A549 (cell line): ENCODE measurements at regions of chr7 and their contacts with region 1.

Region 1: DNA sequence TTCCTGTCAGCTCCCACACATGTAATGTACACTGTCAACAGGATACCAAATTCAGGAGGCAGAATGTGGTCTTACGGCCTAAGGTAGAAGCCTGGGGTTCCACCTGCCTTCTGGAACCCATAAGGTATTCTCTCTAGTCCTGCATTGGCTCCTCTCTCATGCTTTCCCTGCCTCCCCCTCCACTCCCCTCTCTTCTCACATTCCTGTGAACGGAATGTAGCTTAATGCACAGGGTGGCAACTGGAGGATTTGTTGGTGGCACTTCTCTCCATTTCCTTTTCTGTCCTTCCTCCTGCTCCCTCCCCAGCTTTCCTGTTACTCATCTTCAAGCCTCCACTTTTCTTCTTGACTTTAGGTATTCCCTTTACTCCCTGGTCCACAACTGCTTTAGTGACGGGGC is 11.5 kb upstream of the FLNC start:
- DNase-seq: no peak
- ATAC-seq: no peak
- H3K4me3 ChIP-seq: no peak overlapping the region
- H3K27ac ChIP-seq: no peak overlapping the region
- H3K4me1 ChIP-seq: no peaks in the 10 kb centered on the region
- CTCF ChIP-seq: no peak
- EP300 ChIP-seq: no peak
- POLR2A ChIP-seq: no peak
- RAD21 ChIP-seq: no peak

Region 2: DNA sequence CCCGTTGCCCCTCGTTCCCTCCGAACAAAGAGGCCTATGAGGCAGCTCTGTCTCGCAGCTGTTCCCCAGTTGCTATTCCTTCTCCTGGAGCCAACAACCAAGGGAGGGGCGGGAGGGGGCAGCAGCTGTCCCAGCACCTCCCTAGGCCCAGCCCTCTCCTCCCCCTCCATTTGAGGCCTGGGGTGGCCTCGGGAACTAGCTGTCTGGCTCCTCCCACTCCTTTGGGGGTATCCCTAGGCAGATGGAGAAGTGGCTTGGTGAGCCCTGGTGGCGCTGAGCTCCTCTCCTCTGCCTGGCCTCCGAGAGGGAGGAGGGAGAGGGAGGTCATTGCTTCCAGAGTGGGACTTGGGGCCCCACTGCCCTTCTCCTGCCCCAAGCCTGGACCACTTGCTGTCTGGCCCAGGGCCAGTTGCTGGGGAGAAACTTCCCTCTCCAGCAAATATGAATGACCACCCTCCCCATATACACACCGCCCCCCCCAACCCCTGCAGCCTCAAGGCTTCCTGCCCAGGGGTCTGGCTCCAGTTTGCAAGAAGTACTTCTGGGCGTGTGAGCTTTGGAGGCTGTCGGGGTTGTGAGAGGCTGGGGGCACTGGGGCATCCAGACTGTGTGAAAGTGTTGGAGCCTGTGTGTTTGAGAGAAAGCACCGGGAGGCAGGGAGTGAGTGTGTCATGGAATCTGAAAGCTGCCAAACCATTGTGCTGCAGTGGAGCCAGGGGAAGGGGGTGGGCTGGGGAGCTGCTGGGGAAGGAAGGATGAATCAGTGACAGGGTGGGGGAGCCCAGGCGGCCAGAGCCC is 14.7 kb after region 1 on chr7:
- CTCF ChIA-PET with region 1: interaction called, 22 read pairs
- POLR2A ChIA-PET with region 1: interaction called, 8 read pairs
- DNase-seq: no peak
- ATAC-seq: peak in 1 of 2 experiments; percentile 44; a peak in 3 of 6 replicates
- H3K4me3 ChIP-seq: no peak overlapping the region
- H3K27ac ChIP-seq: peak overlapping the region in 1 of 2 experiments; percentile 50; a peak in 3 of 6 replicates
- H3K4me1 ChIP-seq: peaks cover 40% of the 10 kb centered on the region
- CTCF ChIP-seq: no peak
- EP300 ChIP-seq: no peak
- POLR2A ChIP-seq: no peak
- RAD21 ChIP-seq: no peak